Cardiac septum (tissue), 1 donor: ENCODE measurements at regions of chr12 and their contacts with region 1.

Region 1: GRCh38 chr12:1583421-1584078 is 10.8 kb downstream of the FBXL14 start:
- DNase-seq: no peak

Region 2: DNA sequence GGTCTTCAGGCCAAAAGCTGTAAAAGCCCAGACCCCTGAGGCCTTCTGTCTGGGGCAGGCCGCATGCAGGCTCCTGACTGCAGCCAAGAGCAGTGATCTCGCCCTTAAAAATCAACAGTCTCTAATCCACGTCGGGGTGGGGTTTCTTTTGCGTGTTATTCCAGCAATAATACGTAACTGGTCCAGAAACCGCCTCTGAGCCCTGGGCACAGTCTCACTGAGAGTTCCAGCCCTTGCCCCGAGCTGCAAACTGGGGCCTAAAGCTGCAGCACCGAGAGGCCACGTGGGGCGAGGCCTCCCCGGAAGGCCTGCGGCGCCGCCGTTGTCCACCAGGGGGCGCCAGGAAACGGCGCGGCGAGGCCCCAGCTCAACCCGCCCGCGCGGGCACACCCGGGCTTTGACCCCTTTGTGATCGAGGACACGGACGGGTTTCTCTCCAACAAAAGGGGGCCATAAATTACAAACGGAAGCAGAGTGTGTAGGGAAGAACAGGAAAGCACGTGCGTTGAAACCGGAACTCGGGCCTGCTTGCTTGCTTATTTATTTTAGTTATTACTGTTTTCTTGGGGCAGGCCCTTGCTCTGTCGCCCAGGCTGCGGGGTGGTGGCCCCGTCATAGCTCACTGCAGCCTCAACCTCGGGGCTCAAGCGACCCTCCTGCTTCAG is 1007.5 kb before region 1 on chr12:
- intact Hi-C with region 1: loop called (anchors 10 kb)
- DNase-seq: peak; percentile 94

Region 3: DNA sequence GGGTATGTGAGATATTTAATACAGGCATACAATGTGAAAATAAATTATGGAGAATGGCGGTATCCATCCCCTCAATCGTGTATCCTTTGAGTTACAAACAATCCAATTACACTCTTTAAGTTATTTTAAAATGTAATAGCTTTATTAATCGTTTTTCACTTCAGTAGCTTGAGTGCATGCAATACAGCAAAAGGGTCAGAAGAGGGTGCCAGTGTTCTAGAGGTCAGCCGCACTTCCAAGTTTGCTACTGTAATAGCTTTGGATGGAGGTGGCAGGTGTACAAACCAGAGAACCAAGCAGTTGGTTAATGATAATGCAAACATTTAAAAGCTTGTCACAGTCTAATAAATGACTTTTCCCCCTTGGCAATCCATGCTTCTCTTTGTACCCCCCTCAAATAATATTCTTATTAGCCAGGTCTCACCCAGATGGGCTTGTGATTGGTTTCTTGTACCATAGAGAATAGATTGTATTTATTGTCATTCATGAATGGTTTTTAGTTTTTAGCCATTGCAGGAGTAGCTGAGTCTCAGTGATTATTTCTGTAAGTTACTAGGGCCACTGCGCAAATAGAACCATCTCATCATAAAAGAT is 465.5 kb before region 1 on chr12:
- intact Hi-C with region 1: loop called (anchors 2 kb)
- DNase-seq: peak; percentile 77

Region 4: DNA sequence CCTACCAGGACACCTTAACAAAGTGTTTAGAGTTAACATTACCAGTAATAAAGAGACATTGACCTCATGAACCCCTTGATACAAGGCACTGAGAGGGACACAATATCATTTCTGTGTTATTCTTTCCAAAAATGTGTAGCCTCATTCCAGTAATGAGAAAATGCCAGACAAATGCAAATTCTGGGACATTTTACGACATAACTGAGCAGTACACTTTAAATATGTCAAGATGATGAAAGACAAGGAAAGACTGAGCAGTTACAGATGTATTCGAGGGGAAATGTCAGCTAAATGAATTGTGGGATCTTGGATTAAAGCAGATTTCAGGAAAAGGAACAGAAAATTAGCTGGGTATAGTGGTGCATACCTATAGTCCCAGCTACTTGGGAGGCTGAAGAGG is 336.9 kb before region 1 on chr12:
- intact Hi-C with region 1: no loop called
- DNase-seq: no peak

Region 5: GRCh38 chr12:1523558-1524050 is 59.9 kb before region 1 on chr12:
- intact Hi-C with region 1: no loop called
- DNase-seq: peak; percentile 58

Region 6: GRCh38 chr12:1533602-1534304 is 49.8 kb before region 1 on chr12:
- intact Hi-C with region 1: no loop called
- DNase-seq: no peak